Activated naive CD4-positive, alpha-beta T cell treated with anti-CD3 and anti-CD28 coated beads for 36 hours (primary cell): ENCODE measurements at regions of chr2 and their contacts with region 1.

Region 1: DNA sequence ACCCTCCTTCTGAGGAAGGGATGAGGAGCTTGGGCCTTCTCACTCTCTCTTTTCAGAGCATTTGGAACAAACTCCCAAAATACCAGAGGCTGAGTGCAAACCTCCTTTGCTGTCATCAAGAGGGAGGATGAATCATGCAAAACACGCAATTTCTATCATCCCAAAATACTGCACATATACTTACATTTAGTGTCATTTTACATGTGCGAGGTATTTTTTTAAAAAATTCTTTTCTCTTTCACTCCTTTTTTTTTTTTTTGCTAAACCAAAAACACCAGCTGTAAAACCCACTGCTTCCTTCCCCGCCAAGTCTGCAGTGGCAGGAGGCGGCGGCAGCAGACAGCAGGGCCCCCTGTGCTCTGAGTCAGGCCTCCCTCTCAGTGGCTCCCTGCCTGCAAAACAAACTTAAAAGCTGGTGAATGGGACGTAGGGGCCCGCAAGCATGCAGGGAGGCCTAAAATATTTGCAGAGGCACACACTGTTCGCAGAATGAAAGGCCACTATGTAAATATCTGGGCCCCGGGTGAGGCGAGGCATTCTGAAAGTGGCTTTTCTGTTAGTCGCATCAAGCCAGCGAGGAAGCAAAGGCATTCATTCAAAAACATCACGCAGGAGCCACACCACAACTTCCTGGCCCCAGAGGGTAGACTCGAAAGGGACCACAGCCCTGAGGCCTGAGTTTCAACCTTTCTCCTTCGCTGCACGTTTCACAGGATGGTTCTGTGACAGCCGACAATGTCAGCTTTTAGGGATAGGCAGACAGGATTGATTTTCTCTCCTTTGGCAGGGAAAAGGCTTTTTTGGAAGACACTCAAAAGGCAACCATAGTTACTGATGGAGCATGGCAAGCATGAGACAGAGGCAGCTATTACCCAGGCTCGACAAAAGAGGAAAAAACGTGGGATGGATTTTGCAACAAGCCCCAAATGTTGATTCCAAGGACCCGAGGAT is 73.4 kb downstream of the ACTR2 start:
- DNase-seq: peak; percentile 85
- H3K4me3 Mint-ChIP-seq: peak overlapping the region; percentile 62
- H3K27ac Mint-ChIP-seq: peak overlapping the region; percentile 82
- H3K4me1 Mint-ChIP-seq: peaks cover 41% of the 10 kb centered on the region
- H3K27me3 Mint-ChIP-seq: no peaks in the 10 kb centered on the region

Region 2: DNA sequence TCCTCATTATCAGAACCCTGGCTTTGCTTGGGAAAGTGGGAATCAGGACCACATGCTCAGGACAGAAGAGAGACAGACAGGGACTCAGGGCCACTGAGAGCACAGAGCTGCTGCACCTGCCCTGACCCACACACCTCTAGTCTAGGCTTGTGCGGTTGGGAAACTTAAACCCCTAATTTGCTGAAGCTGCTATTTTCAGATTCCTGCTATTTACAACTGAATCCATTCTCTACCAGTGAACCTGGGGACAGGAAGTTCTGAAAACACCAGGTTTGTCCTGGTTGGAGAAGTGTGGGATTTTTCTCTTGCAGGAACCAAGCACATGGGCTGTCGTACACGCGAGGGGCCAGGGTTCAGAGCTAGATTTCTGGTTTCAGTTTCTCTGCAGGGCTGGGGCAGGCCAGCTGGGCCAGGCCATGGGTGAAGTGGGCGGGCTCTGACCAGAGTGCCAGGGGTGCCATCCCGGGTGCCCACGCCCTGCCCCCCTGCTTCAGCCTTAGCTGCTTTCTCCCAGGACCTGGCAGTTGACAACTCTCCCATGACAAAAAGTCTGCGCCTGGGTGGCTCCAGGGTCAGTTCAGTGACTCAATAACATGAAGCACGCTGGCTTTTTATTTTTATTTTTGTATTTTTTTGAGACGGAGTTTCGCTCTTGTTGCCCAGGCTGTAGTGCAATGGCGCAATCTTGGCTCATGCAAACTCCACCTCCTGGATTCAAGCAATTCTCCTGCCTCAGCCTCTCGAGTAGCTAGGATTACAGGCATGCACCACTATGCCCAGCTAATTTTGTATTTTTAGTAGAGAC is 363.1 kb before region 1 on chr2:
- CTCF ChIA-PET with region 1: no interaction called
- intact Hi-C with region 1: no loop called
- DNase-seq: no peak
- H3K4me3 Mint-ChIP-seq: no peak overlapping the region
- H3K27ac Mint-ChIP-seq: no peak overlapping the region
- H3K4me1 Mint-ChIP-seq: peaks cover 5% of the 10 kb centered on the region
- H3K27me3 Mint-ChIP-seq: no peaks in the 10 kb centered on the region

Region 3: GRCh38 chr2:65056215-65057053 is 244.6 kb before region 1 on chr2 and contains the start of gene CEP68:
- CTCF ChIA-PET with region 1: interaction called, 3 read pairs
- intact Hi-C with region 1: loop called (anchors 1 kb)
- DNase-seq: peak; percentile 98
- H3K4me3 Mint-ChIP-seq: peak within 1 kb of the TSS; percentile 93
- H3K27ac Mint-ChIP-seq: peak within 1 kb of the TSS; percentile 67
- H3K4me1 Mint-ChIP-seq: peaks cover 51% of the 10 kb centered on the region
- H3K27me3 Mint-ChIP-seq: no peaks in the 10 kb centered on the region
- total RNA-seq, gene CEP68: 6.0 to 7.3 TPM

Region 4: GRCh38 chr2:65227425-65228262 is 73.4 kb before region 1 on chr2 and contains the start of gene ACTR2:
- CTCF ChIA-PET with region 1: no interaction called
- intact Hi-C with region 1: loop called (anchors 1 kb)
- DNase-seq: peak; percentile 96
- H3K4me3 Mint-ChIP-seq: peak within 1 kb of the TSS; percentile 98
- H3K27ac Mint-ChIP-seq: peak within 1 kb of the TSS; percentile 99
- H3K4me1 Mint-ChIP-seq: peaks cover 41% of the 10 kb centered on the region
- H3K27me3 Mint-ChIP-seq: no peaks in the 10 kb centered on the region
- total RNA-seq, gene ACTR2: 358 to 366 TPM

Region 5: DNA sequence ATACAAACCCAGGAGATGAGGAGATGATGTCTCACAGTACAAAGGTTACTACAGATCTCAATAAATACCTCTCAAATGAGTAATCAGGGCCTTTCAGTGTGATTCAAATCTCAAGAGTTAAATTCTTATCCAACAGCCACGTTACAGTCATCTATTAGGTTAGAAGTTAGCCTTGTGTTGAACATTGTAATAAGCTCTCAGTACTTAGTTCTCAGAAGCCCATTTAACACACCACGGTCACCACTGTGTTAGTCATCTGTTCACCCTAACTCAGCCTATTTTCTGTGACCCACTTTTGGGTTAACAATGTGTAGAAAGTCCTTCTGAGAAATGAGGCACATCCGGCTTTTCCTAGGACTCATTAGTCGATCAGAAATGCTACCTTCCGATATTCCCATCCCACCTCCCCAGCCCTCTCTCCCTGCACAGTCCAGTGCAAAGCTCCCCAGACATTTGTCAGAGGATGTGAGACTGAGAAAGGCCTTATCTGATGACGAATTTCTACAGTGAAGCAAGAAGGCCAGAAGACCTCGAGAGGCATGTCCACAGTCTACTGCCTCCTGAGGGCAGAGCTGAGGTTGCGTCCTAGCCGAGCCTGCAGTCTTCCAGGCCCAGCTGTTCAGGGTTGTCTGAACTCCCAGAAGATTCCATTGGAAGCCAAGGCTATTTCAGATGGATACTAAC is 19.1 kb after region 1 on chr2:
- CTCF ChIA-PET with region 1: interaction called, 3 read pairs
- intact Hi-C with region 1: loop called (anchors 1 kb)
- DNase-seq: no peak
- H3K4me3 Mint-ChIP-seq: no peak overlapping the region
- H3K27ac Mint-ChIP-seq: no peak overlapping the region
- H3K4me1 Mint-ChIP-seq: peaks cover 11% of the 10 kb centered on the region
- H3K27me3 Mint-ChIP-seq: no peaks in the 10 kb centered on the region

Region 6: DNA sequence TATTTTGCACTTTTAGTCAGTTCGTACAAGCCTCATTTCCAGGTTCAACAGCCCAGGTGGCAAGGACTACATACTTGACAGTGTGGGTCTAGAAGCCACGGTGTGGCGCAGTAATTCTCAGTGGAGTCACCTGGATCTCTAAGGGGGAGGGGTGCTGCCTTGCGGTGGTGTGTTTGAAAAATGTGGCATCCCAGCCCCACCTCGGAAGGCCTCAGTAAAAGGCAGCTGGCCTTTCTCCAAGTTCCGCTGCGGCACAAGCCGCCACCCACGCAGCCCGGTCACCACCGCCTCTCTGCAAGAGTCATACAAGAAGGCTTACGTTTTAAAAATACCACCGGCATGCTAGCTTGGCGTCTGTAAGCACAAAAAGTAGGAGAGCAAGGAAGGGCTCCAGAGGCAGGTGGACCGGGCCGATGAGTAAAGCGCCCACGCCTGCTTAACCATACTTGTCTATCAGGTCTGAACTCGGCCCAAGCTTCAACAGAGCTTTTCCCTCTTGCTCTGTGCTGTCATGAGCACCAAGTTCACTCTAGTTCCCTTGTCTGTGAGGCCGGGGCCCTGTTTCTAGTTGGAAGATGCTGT is 81.8 kb after region 1 on chr2:
- CTCF ChIA-PET with region 1: no interaction called
- intact Hi-C with region 1: loop called (anchors 1 kb)
- DNase-seq: peak; percentile 94
- H3K4me3 Mint-ChIP-seq: peak overlapping the region; percentile 23
- H3K27ac Mint-ChIP-seq: no peak overlapping the region
- H3K4me1 Mint-ChIP-seq: peaks cover 24% of the 10 kb centered on the region
- H3K27me3 Mint-ChIP-seq: no peaks in the 10 kb centered on the region